ENCODE measurements at regions of chr5 and their contacts with region 1.

Region 1: GRCh38 chr5:39566891-39567290 is 142.1 kb upstream of the DAB2 start:
- DNase-seq: no peak
- ATAC-seq: no peak
- H3K4me3 ChIP-seq: no peak overlapping the region
- H3K27ac ChIP-seq: no peak overlapping the region
- H3K4me1 ChIP-seq: peaks cover 0 to 11% (median 5%) of the 10 kb centered on the region in 4 donors
- H3K27me3 ChIP-seq: no peaks in the 10 kb centered on the region
- CTCF ChIP-seq: no peak
- POLR2A ChIP-seq: no peak

Region 2: GRCh38 chr5:38948501-38948900 is 618.4 kb before region 1 on chr5:
- intact Hi-C with region 1: no loop called
- DNase-seq: no peak
- ATAC-seq: no peak
- H3K4me3 ChIP-seq: no peak overlapping the region
- H3K27ac ChIP-seq: no peak overlapping the region
- H3K4me1 ChIP-seq: no peaks in the 10 kb centered on the region
- H3K27me3 ChIP-seq: no peaks in the 10 kb centered on the region
- CTCF ChIP-seq: no peak
- POLR2A ChIP-seq: no peak

Region 3: DNA sequence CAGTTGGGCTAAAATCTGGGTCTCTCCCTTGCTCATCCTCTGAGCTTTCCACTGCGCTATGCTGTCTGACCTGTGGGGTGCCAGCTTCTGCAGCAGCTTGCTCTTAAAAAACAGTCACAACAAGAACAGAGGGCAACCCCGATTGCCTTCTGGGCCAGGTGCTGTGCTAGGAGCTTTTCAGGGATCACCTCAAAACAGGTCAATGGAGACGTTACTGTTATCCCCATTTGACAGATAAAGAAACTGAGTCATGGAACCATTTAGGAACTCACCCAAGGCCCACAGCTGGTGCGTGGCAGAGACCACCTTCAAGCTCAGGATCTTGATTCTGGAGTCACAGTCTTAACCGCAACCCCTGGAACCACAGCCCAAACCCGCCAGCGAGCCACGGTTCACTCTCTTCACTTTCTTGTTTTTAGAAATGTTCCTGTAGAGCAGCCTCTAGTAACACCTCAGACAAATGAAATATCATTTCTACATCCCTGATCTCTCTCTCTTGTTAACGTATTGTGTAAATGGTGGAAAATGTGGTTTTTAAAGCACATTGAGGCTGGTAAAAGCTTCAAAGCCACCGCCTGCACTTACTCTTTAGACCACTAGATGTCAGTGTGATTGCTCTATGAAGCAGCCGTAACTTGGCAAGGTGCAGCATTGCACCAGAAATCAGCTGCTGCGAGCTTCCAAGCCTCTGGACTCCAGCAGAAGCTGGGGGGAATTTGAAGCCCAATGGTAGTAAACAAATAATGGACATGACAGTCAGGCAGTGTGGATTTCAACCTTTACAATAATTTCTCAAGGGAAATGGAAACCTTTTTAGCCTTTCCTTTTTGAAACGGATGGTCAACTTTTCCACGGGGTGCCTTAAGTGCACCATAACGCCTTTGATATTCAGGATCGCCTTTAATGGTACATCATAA is 349.3 kb before region 1 on chr5:
- intact Hi-C with region 1: loop called in 1 of 2 experiments (anchors 10 kb)
- DNase-seq: peak; percentile 61 to 75 (median 62)
- ATAC-seq: peak; percentile 91 to 96 (median 94)
- H3K4me3 ChIP-seq: no peak overlapping the region
- H3K27ac ChIP-seq: no peak overlapping the region
- H3K4me1 ChIP-seq: no peaks in the 10 kb centered on the region
- H3K27me3 ChIP-seq: no peaks in the 10 kb centered on the region
- CTCF ChIP-seq: peak; percentile 97 to 99 (median 97)
- POLR2A ChIP-seq: no peak

Region 4: GRCh38 chr5:39314591-39314990 is 252.3 kb before region 1 on chr5:
- intact Hi-C with region 1: no loop called
- DNase-seq: no peak
- ATAC-seq: no peak
- H3K4me3 ChIP-seq: no peak overlapping the region
- H3K27ac ChIP-seq: no peak overlapping the region
- H3K4me1 ChIP-seq: no peaks in the 10 kb centered on the region
- H3K27me3 ChIP-seq: no peaks in the 10 kb centered on the region
- CTCF ChIP-seq: no peak
- POLR2A ChIP-seq: no peak

Region 5: GRCh38 chr5:39714036-39714698 is 147.3 kb after region 1 on chr5:
- intact Hi-C with region 1: no loop called
- DNase-seq: peak in 1 of 3 donors; percentile 47
- ATAC-seq: peak; percentile 69 to 80 (median 78)
- H3K4me3 ChIP-seq: no peak overlapping the region
- H3K27ac ChIP-seq: no peak overlapping the region
- H3K4me1 ChIP-seq: peaks cover 0 to 18% (median 4%) of the 10 kb centered on the region in 4 donors
- H3K27me3 ChIP-seq: no peaks in the 10 kb centered on the region
- CTCF ChIP-seq: peak; percentile 60 to 75 (median 66)
- POLR2A ChIP-seq: no peak

Region 6: DNA sequence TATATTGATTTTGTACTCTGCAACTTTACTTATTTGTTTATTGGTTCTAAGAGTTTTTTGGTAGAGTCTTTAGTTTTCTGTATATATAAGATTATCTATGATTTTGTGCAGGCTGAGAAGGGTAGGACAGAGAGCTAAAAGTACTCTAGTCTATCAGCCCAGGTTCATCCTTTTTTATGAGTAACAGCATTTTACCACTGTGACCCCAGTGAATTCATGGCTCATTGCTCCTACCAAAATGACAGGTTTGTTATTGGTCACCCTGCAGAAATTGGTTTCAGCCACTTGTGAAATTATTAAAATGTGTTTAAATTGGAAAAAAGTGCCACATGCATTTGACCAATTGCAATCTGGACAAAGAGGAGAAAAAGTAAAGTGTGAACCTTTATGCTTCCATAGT is 279.3 kb after region 1 on chr5:
- intact Hi-C with region 1: no loop called
- DNase-seq: no peak
- ATAC-seq: no peak
- H3K4me3 ChIP-seq: no peak overlapping the region
- H3K27ac ChIP-seq: no peak overlapping the region
- H3K4me1 ChIP-seq: no peaks in the 10 kb centered on the region
- H3K27me3 ChIP-seq: no peaks in the 10 kb centered on the region
- CTCF ChIP-seq: no peak
- POLR2A ChIP-seq: no peak